ENCODE measurements at regions of chr3 and their contacts with region 1.

Region 1: GRCh38 chr3:73056014-73056844 is 5.2 kb upstream of the EBLN2 start:
- DNase-seq: peak in 6 of 9 donors; percentile 16 to 52 (median 26)
- ATAC-seq: peak; percentile 54
- H3K4me3 ChIP-seq: no peak overlapping the region
- H3K4me3 Mint-ChIP-seq: no peak overlapping the region
- H3K27ac ChIP-seq: no peak overlapping the region
- H3K27ac Mint-ChIP-seq: peak overlapping the region in 6 of 9 donors; percentile 14 to 46 (median 30)
- H3K4me1 ChIP-seq: no peaks in the 10 kb centered on the region
- H3K4me1 Mint-ChIP-seq: peaks cover 8 to 30% (median 26%) of the 10 kb centered on the region in 7 donors
- H3K27me3 ChIP-seq: no peaks in the 10 kb centered on the region
- H3K27me3 Mint-ChIP-seq: no peaks in the 10 kb centered on the region

Region 2: GRCh38 chr3:72938471-72939265 is 117.6 kb before region 1 on chr3:
- CTCF ChIA-PET with region 1: interaction called, 46 read pairs
- POLR2A ChIA-PET with region 1: no interaction called
- intact Hi-C with region 1: loop called (anchors 1 kb)
- DNase-seq: peak in 7 of 9 donors; percentile 48 to 76 (median 62)
- ATAC-seq: peak; percentile 99
- H3K4me3 ChIP-seq: no peak overlapping the region
- H3K4me3 Mint-ChIP-seq: no peak overlapping the region
- H3K27ac ChIP-seq: no peak overlapping the region
- H3K27ac Mint-ChIP-seq: no peak overlapping the region
- H3K4me1 ChIP-seq: no peaks in the 10 kb centered on the region
- H3K4me1 Mint-ChIP-seq: no peaks in the 10 kb centered on the region
- H3K27me3 ChIP-seq: no peaks in the 10 kb centered on the region
- H3K27me3 Mint-ChIP-seq: peaks cover 0 to 28% (median 0%) of the 10 kb centered on the region in 5 donors

Region 3: GRCh38 chr3:73773233-73773632 is 717.0 kb after region 1 on chr3:
- CTCF ChIA-PET with region 1: no interaction called
- POLR2A ChIA-PET with region 1: no interaction called
- intact Hi-C with region 1: no loop called
- DNase-seq: no peak
- ATAC-seq: no peak
- H3K4me3 ChIP-seq: no peak overlapping the region
- H3K4me3 Mint-ChIP-seq: no peak overlapping the region
- H3K27ac ChIP-seq: no peak overlapping the region
- H3K27ac Mint-ChIP-seq: no peak overlapping the region
- H3K4me1 ChIP-seq: no peaks in the 10 kb centered on the region
- H3K4me1 Mint-ChIP-seq: no peaks in the 10 kb centered on the region
- H3K27me3 ChIP-seq: no peaks in the 10 kb centered on the region
- H3K27me3 Mint-ChIP-seq: no peaks in the 10 kb centered on the region

Region 4: DNA sequence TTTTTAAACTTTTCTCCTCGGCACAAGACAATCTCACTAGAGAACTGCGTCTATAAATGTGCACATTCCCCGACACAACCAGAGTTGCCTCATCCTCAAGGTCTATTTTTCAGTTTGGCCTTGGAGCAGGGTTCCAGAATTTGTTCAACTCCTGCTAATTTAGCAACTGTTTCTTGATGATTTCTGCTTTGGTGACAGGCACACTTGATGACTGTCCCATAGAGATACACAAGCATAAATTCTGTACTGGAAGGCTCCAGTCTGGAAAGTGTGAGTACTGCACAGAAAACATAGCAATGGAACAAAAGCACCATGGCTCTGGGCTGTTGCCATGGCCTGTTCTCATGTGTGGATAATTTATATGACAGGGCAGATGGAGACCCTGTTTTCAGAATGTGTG is 948.2 kb after region 1 on chr3:
- CTCF ChIA-PET with region 1: no interaction called
- POLR2A ChIA-PET with region 1: no interaction called
- intact Hi-C with region 1: no loop called
- DNase-seq: no peak
- ATAC-seq: no peak
- H3K4me3 ChIP-seq: no peak overlapping the region
- H3K4me3 Mint-ChIP-seq: no peak overlapping the region
- H3K27ac ChIP-seq: no peak overlapping the region
- H3K27ac Mint-ChIP-seq: no peak overlapping the region
- H3K4me1 ChIP-seq: no peaks in the 10 kb centered on the region
- H3K4me1 Mint-ChIP-seq: no peaks in the 10 kb centered on the region
- H3K27me3 ChIP-seq: no peaks in the 10 kb centered on the region
- H3K27me3 Mint-ChIP-seq: no peaks in the 10 kb centered on the region